Esophagus muscularis mucosa (tissue), 4 donors: ENCODE measurements at regions of chr7 and their contacts with region 1.

Region 1: DNA sequence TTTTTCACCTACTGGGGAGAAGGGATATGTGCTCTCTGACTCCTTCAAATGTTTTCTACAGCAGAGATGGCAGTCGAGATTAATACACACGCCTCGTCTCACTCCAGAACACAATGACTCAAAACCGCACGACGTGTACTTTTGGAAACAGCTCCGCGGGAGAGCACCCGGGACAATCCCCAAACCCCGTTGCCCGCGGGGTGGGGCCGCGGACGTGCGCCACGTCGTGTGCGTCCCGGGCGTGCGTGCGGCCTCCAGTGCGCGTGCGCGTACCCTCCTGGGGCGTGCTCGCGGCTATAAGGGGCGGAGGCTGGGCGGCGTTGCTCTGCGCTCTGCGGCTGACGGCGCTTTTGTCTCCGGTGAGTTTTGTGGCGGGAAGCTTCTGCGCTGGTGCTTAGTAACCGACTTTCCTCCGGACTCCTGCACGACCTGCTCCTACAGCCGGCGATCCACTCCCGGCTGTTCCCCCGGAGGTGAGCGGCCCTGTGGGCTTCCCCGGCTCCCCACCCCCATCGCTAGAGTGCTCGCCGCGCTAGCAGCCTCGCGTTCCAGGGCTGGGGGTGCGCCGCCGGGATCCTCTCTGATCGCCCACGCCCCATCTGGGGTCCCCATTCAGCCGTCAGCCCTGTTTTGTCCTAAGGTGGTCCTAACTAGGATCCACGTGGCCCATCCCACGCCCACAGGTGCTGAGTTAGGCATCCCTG is at the start of gene HILPDA:
- DNase-seq: peak; percentile 98
- H3K4me3 ChIP-seq: peak within 1 kb of the TSS; percentile 76 to 89 (median 80)
- H3K27ac ChIP-seq: peak within 1 kb of the TSS; percentile 79 to 95 (median 93)
- H3K4me1 ChIP-seq: peaks cover 43 to 68% (median 55%) of the 10 kb centered on the region in 4 donors
- H3K27me3 ChIP-seq: no peaks in the 10 kb centered on the region
- CTCF ChIP-seq: peak in 1 of 3 experiments; percentile 1
- EP300 ChIP-seq: peak; percentile 36
- POLR2A ChIP-seq: no peak
- total RNA-seq, gene HILPDA: 4.1 to 15.1 (median 5.8) TPM

Region 2: GRCh38 chr7:128221929-128222403 is 233.7 kb before region 1 on chr7:
- intact Hi-C with region 1: no loop called
- DNase-seq: no peak
- H3K4me3 ChIP-seq: no peak overlapping the region
- H3K27ac ChIP-seq: no peak overlapping the region
- H3K4me1 ChIP-seq: no peaks in the 10 kb centered on the region
- H3K27me3 ChIP-seq: peaks cover 0 to 17% (median 0%) of the 10 kb centered on the region in 4 donors
- CTCF ChIP-seq: no peak
- EP300 ChIP-seq: no peak
- POLR2A ChIP-seq: no peak

Region 3: DNA sequence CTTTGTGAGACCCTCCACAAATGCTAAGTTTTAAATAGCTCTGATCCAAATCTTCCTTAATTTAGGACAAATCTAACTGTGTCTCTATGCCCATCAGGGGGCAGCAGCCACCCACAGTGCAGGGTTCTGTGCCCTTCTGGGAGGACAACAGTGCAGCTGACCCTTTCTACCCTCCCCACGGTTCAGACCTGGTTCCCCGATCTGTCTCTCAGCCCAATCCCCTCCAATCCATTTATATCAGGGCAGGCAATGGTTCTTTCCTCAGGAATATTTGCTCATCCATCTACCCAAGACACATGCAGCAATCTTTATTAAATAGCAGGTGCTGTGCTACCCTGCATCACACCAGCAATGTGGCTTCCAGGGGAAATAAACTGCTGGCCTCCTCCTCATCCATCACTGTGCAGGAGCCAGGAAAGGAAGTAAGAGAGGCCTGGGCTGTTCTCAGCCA is 108.0 kb before region 1 on chr7:
- intact Hi-C with region 1: loop called (anchors 5 kb)
- DNase-seq: no peak
- H3K4me3 ChIP-seq: no peak overlapping the region
- H3K27ac ChIP-seq: no peak overlapping the region
- H3K4me1 ChIP-seq: peaks cover 13 to 29% (median 23%) of the 10 kb centered on the region in 4 donors
- H3K27me3 ChIP-seq: peaks cover 0 to 25% (median 6%) of the 10 kb centered on the region in 4 donors
- CTCF ChIP-seq: peak; percentile 56 to 70 (median 66)
- EP300 ChIP-seq: no peak
- POLR2A ChIP-seq: no peak

Region 4: DNA sequence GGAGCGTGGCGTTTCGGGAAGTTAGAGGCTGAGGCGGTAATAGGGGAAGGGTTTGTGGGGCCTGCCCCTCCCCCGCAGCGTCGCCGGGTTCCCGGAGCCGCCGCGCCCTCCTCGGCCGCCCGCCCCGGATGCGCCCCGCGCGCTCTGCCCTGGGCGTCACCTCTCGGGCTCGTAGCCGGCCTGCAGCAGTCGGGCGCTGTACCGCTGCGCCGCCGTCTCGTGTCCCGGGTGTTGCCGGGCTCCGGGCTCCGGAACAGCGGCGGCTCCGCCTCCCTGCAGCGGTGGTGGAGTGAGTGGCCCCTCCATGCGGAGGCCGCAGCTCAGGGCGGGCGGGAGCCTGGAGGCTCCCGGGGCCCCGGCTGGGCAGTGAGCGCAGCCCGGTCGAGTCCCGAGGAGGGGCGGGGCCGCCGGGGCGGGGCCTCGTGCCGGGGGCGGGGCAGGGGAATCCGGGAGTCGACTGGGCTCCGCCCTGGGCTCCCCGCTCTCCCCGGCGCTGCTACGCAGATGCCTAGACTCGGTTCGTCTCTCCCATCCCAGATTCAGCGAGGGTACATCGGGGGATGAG is 46.0 kb before region 1 on chr7 and contains the start of gene IMPDH1:
- intact Hi-C with region 1: loop called (anchors 10 kb)
- DNase-seq: peak; percentile 97
- H3K4me3 ChIP-seq: peak within 1 kb of the TSS; percentile 63 to 91 (median 71)
- H3K27ac ChIP-seq: peak within 1 kb of the TSS; percentile 89 to 97 (median 92)
- H3K4me1 ChIP-seq: peaks cover 44 to 57% (median 53%) of the 10 kb centered on the region in 4 donors
- H3K27me3 ChIP-seq: no peaks in the 10 kb centered on the region
- CTCF ChIP-seq: no peak
- EP300 ChIP-seq: no peak
- POLR2A ChIP-seq: no peak
- total RNA-seq, gene IMPDH1: 29.1 to 72.1 (median 56.0) TPM

Region 5: GRCh38 chr7:128425850-128426249 is 29.9 kb before region 1 on chr7:
- intact Hi-C with region 1: loop called (anchors 1 kb)
- DNase-seq: no peak
- H3K4me3 ChIP-seq: no peak overlapping the region
- H3K27ac ChIP-seq: no peak overlapping the region
- H3K4me1 ChIP-seq: peaks cover 0 to 12% (median 5%) of the 10 kb centered on the region in 4 donors
- H3K27me3 ChIP-seq: peaks cover 0 to 11% (median 0%) of the 10 kb centered on the region in 4 donors
- CTCF ChIP-seq: peak; percentile 91 to 98 (median 93)
- EP300 ChIP-seq: no peak
- POLR2A ChIP-seq: no peak

Region 6: GRCh38 chr7:129252128-129252527 is 796.4 kb after region 1 on chr7:
- intact Hi-C with region 1: no loop called
- DNase-seq: no peak
- H3K4me3 ChIP-seq: no peak overlapping the region
- H3K27ac ChIP-seq: no peak overlapping the region
- H3K4me1 ChIP-seq: peaks cover 0 to 12% (median 1%) of the 10 kb centered on the region in 4 donors
- H3K27me3 ChIP-seq: no peaks in the 10 kb centered on the region
- CTCF ChIP-seq: no peak
- EP300 ChIP-seq: no peak
- POLR2A ChIP-seq: no peak